T-cell (primary cell): ENCODE measurements at regions of chr4 and their contacts with region 1.

Region 1: GRCh38 chr4:56971383-56971782 is 6.0 kb downstream of the NOA1 start:
- DNase-seq: no peak
- ATAC-seq: no peak
- H3K4me3 ChIP-seq: no peak overlapping the region
- H3K4me3 Mint-ChIP-seq: no peak overlapping the region
- H3K27ac ChIP-seq: no peak overlapping the region
- H3K27ac Mint-ChIP-seq: no peak overlapping the region
- H3K4me1 ChIP-seq: peaks cover 5 to 23% of the 10 kb centered on the region in 2 experiments
- H3K4me1 Mint-ChIP-seq: peaks cover 27 to 47% (median 37%) of the 10 kb centered on the region in 3 donors
- H3K27me3 ChIP-seq: no peaks in the 10 kb centered on the region
- H3K27me3 Mint-ChIP-seq: no peaks in the 10 kb centered on the region

Region 2: DNA sequence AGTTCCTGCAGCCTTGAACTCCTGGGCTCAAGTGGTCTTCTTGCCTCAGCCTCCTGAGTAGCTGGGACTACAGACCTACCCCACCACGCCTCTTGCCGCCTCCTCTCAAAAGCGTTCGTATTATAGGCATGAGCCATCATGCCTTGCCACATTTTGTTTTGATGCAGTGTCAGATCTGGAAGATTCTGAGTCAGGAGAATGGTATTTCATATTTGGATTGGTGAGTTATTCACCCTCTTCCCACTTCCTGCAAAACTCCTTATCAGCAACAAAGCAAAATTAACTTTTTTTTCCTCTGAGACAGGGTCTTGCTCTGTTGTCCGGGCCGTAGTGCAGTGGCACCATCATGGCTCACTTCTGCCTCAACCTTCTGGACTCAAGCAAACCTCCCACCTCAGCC is 34.1 kb before region 1 on chr4:
- CTCF ChIA-PET with region 1: interaction called in 1 of 2 experiments, 6 read pairs
- POLR2A ChIA-PET with region 1: interaction called in 1 of 2 experiments, 10 read pairs
- DNase-seq: no peak
- ATAC-seq: no peak
- H3K4me3 ChIP-seq: no peak overlapping the region
- H3K4me3 Mint-ChIP-seq: no peak overlapping the region
- H3K27ac ChIP-seq: no peak overlapping the region
- H3K27ac Mint-ChIP-seq: peak overlapping the region in 1 of 2 donors; percentile 14
- H3K4me1 ChIP-seq: no peaks in the 10 kb centered on the region
- H3K4me1 Mint-ChIP-seq: peaks cover 13 to 18% (median 16%) of the 10 kb centered on the region in 3 donors
- H3K27me3 ChIP-seq: no peaks in the 10 kb centered on the region
- H3K27me3 Mint-ChIP-seq: no peaks in the 10 kb centered on the region